Prostate gland (tissue), 2 donors: ENCODE measurements at regions of chr19 and their contacts with region 1.

Region 1: GRCh38 chr19:39397360-39398296 is 6.5 kb downstream of the MED29 start:
- DNase-seq: peak; percentile 85
- H3K4me3 ChIP-seq: no peak overlapping the region
- H3K27ac ChIP-seq: peak overlapping the region; percentile 67 to 83
- H3K4me1 ChIP-seq: peaks cover 5% of the 10 kb centered on the region
- H3K27me3 ChIP-seq: no peaks in the 10 kb centered on the region
- CTCF ChIP-seq: peak; percentile 84 to 99 (median 99)
- POLR2A ChIP-seq: no peak

Region 2: DNA sequence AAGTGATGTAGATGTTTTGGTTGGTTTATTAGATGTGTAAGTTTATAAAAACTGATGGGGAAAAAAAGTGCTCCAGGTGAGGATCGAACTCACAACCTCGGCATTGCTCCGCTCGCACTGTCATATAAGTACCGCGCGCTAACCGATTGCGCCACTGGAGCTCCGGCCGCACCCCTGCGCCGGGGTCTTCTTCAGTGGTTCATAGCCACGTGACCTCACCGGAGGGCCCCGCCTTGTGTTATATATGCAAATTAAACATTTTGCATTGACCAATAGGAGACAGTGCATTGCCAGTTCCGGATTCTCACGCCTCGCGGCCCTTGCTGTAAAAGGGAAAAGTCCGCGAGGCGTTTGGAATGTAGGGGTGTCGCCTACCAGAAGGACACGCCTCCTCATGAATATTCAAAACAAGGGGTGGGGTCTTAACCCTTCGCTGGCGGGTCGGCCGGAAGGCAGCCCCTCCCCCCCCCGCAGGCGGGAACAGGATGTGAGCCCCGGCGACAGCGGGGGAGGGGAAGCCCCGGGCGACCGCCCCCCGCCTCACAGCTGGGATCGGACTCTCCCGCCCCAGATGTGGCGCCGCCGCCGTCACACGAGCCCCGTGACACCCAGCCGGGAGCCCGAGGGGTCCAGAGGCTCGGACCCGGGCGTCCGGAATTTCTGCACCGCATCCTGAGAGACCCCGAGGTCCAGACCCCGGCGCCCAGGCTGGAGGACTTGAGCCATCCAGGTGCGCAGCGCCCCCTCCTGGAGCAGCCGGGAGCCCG is 14.7 kb after region 1 on chr19 and contains the start of gene PLEKHG2:
- intact Hi-C with region 1: loop called (anchors 1 kb)
- DNase-seq: peak; percentile 99
- H3K4me3 ChIP-seq: peak within 1 kb of the TSS; percentile 73 to 76
- H3K27ac ChIP-seq: peak within 1 kb of the TSS; percentile 100
- H3K4me1 ChIP-seq: no peaks in the 10 kb centered on the region
- H3K27me3 ChIP-seq: no peaks in the 10 kb centered on the region
- CTCF ChIP-seq: peak in 3 of 4 experiments; percentile 93 to 94 (median 93)
- POLR2A ChIP-seq: peak; percentile 45
- total RNA-seq, gene PLEKHG2: 14.4 to 21.1 TPM